Posterior vena cava (tissue), 2 donors: ENCODE measurements at regions of chr12 and their contacts with region 1.

Region 1: DNA sequence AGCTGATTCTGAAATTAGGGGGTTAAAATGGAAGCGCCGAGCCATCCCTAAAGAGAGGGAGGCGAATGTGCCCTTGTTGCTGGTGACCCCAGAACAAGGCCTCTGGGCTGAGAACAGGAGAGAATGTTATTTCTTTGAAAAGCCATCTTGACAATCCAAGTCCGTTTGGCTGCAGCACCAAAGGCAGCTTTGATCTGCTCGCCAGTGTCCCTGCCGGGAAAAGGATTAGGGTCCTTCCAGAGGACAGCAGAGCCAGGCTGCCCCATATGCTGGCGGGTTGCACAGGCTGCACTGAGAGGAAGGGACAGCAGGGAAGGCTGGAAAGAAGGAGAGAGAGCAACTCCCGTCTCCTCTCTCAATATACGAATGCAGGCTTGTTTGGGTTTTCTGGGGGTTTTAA is 141.7 kb downstream of the TMEM132C start:
- DNase-seq: no peak

Region 2: DNA sequence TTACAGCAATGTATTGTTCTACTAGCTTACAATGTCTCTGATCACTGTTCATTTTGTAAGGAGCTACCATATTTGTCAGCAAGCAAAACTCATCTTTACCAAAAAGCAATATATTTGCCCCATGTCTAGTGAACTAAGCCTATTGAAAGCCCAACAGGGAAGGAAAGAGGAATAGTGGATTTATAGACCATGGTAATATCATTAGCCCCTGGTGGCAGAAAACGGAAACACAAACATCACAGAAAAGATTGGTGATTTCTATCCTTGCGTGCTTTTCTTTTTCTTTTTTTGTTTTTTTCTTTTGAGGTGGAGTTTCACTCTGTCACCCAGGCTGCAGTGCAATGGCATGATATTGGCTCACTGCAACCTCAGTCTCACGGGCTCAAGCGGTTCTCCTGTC is 1704.1 kb before region 1 on chr12:
- intact Hi-C with region 1: loop called in 1 of 2 experiments (anchors 5 kb)
- DNase-seq: no peak